Right cardiac atrium (tissue), 5 donors: ENCODE measurements at regions of chr17 and their contacts with region 1.

Region 1: DNA sequence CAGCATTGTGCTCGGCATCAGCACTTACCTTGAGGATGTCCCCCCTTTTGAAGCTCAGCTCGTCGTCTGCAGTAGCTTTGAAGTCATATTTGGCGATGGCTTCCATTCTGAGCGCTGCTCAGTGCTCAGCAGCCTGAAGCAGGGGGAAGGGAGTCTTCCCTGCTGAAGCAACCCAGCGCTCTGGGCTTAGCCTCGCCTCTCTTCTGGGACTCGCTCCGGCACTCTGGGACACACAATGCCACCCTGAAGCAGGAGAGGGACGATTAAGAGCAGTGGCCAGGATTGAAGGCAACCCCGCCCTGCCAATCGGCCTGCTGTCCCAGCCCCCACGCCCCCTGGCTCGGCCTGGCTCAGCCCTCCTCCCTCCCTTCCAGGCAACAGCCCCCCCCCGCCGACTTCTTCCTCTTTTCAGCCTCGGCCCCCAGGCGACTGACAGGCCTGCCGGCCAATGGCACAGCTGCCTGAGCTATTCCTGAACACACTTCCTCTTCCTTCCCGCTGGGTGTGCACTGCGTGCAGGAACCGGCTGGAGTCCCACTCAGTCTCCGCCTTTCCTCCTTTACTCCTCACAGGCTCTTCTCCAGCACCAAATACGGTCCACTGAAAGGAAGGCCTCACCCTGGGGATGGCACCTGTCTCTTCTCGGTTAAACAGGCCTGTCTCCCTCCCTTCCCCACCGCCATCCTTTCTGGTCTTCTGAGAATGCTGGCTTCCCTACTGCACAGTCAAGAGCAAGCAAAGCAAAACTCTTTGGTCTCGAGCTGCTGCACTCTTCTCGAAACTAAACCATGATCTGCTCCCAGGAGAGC is 11.8 kb downstream of the GRB2 start:
- DNase-seq: peak; percentile 99 to 100 (median 100)
- ATAC-seq: peak; percentile 100
- H3K4me3 ChIP-seq: peak overlapping the region; percentile 75
- H3K27ac ChIP-seq: peak overlapping the region; percentile 76
- H3K4me1 ChIP-seq: no peaks in the 10 kb centered on the region
- H3K27me3 ChIP-seq: no peaks in the 10 kb centered on the region

Region 2: GRCh38 chr17:75345514-75346167 is 48.1 kb before region 1 on chr17:
- intact Hi-C with region 1: loop called in 1 of 4 experiments (anchors 10 kb)
- DNase-seq: no peak
- ATAC-seq: no peak
- H3K4me3 ChIP-seq: no peak overlapping the region
- H3K27ac ChIP-seq: no peak overlapping the region
- H3K4me1 ChIP-seq: peaks cover 26% of the 10 kb centered on the region
- H3K27me3 ChIP-seq: no peaks in the 10 kb centered on the region